Transverse colon (tissue), 4 donors: ENCODE measurements at regions of chr19 and their contacts with region 1.

Region 1: GRCh38 chr19:10388957-10389356 is 8.6 kb upstream of the TYK2 start:
- DNase-seq: peak; percentile 93
- H3K4me3 ChIP-seq: no peak overlapping the region
- H3K27ac ChIP-seq: no peak overlapping the region
- H3K4me1 ChIP-seq: peaks cover 0 to 5% (median 0%) of the 10 kb centered on the region in 4 donors
- H3K27me3 ChIP-seq: no peaks in the 10 kb centered on the region
- CTCF ChIP-seq: peak; percentile 91 to 96 (median 93)
- EP300 ChIP-seq: no peak
- POLR2A ChIP-seq: no peak

Region 2: DNA sequence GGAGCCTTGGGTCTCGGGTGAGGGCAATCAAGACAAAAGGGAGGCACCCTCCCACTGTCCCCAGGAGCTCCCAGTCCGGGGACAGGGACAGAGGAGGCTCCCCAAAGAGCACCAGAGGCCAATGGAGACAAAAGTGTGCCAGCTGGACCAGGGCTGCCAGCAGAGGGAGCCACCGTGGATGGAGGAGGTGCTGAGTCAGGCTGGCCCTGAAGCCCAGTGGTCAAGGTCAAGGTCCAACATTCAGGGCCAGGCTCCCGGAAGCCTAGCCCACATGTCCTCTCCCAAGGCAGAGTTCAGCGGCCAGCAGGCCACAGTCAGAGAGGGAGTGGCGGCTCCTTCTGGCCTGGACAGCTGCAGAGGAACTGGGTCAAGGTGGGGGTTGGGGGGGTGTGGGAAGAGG is 387.1 kb before region 1 on chr19:
- in situ Hi-C with region 1: no loop called
- intact Hi-C with region 1: no loop called
- DNase-seq: peak; percentile 76
- H3K4me3 ChIP-seq: no peak overlapping the region
- H3K27ac ChIP-seq: no peak overlapping the region
- H3K4me1 ChIP-seq: peaks cover 0 to 13% (median 0%) of the 10 kb centered on the region in 4 donors
- H3K27me3 ChIP-seq: peaks cover 12% of the 10 kb centered on the region
- CTCF ChIP-seq: peak; percentile 24 to 54 (median 50)
- EP300 ChIP-seq: no peak
- POLR2A ChIP-seq: no peak

Region 3: GRCh38 chr19:10259162-10259905 is 129.6 kb before region 1 on chr19:
- in situ Hi-C with region 1: loop called in 1 of 4 experiments (anchors 5 kb)
- intact Hi-C with region 1: no loop called
- DNase-seq: peak; percentile 88
- H3K4me3 ChIP-seq: no peak overlapping the region
- H3K27ac ChIP-seq: peak overlapping the region in 1 of 4 donors; percentile 8
- H3K4me1 ChIP-seq: peaks cover 0 to 5% (median 0%) of the 10 kb centered on the region in 4 donors
- H3K27me3 ChIP-seq: no peaks in the 10 kb centered on the region
- CTCF ChIP-seq: peak; percentile 64 to 72 (median 69)
- EP300 ChIP-seq: no peak
- POLR2A ChIP-seq: no peak

Region 4: DNA sequence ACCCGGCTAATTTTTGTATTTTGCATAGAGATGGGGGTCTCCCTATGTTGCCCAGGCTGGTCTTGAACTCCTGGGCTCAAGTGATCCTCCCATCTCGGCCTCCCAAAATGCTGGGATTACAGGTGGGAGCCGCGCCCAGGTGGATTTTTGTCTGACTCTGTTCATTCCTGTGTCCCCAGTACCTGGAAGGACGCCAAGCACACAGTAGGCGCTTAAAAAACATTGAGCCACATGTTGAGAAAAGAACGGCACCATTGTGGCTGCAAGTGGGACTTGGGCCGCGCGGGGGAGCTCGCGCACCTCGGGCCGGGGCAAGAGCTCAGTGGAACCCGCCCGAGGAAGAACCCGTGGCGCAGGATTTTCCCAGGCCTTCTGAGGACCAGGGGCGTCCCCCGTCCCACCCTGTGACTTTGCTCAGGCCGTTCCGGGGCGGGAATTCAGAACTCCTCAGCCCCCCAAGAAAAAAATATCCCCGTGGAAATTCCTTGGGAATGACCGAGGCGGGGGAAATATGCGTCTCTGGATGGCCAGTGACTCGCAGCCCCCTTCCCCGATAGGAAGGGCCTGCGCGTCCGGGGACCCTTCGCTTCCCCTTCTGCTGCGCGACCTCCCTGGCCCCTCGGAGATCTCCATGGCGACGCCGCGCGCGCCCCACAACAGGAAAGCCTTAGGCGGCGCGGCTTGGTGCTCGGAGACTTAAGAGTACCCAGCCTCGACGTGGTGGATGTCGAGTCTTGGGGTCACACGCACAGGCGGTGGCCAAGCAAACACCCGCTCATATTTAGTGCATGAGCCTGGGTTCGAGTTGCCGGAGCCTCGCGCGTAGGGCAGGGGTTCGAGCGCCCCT is 119.4 kb before region 1 on chr19:
- in situ Hi-C with region 1: loop called in 3 of 4 experiments (anchors 5 kb)
- intact Hi-C with region 1: loop called (anchors 1 kb)
- DNase-seq: peak; percentile 90
- H3K4me3 ChIP-seq: peak overlapping the region; percentile 25 to 45 (median 42)
- H3K27ac ChIP-seq: peak overlapping the region; percentile 74 to 86 (median 80)
- H3K4me1 ChIP-seq: peaks cover 6 to 23% (median 17%) of the 10 kb centered on the region in 4 donors
- H3K27me3 ChIP-seq: peaks cover 24% of the 10 kb centered on the region
- CTCF ChIP-seq: peak; percentile 92 to 97 (median 94)
- EP300 ChIP-seq: no peak
- POLR2A ChIP-seq: no peak

Region 5: DNA sequence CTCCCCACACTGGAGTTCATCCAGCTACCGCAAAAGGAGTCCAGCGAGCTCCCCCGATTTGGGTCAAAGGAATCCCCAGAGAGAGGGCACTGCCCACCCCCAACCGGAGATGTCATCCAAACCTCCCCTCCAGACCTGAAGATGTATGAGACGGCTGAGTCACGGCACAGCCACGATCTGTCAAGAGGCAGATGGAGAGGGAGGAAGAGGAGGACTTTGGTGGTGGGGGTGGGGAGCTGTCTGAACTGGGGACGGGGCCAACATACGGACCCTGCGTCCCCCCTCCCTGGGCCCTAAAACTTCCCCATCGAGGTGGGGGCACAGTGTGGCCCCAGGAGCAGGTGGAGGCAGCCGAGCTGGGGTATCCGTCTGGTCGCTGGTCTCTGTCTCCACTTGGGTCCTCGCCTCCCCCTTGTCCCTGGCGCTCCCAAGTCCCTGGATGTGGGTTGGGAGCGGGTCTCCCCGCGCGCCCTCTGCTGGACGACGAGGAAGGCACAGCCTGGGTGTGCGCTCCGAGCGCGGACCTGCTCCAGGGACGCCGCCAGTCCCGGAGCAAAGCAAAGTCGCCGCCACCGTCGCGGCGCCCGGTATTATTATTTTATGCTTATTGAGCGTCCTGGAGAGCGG is 35.2 kb after region 1 on chr19:
- in situ Hi-C with region 1: no loop called
- intact Hi-C with region 1: no loop called
- DNase-seq: peak; percentile 86
- H3K4me3 ChIP-seq: peak overlapping the region; percentile 5 to 46 (median 17)
- H3K27ac ChIP-seq: peak overlapping the region; percentile 20 to 55 (median 28)
- H3K4me1 ChIP-seq: peaks cover 14 to 43% (median 37%) of the 10 kb centered on the region in 4 donors
- H3K27me3 ChIP-seq: peaks cover 82% of the 10 kb centered on the region
- CTCF ChIP-seq: peak; percentile 84 to 97 (median 93)
- EP300 ChIP-seq: no peak
- POLR2A ChIP-seq: no peak